Gastrocnemius medialis (tissue), 4 donors: ENCODE measurements at regions of chr7 and their contacts with region 1.

Region 1: DNA sequence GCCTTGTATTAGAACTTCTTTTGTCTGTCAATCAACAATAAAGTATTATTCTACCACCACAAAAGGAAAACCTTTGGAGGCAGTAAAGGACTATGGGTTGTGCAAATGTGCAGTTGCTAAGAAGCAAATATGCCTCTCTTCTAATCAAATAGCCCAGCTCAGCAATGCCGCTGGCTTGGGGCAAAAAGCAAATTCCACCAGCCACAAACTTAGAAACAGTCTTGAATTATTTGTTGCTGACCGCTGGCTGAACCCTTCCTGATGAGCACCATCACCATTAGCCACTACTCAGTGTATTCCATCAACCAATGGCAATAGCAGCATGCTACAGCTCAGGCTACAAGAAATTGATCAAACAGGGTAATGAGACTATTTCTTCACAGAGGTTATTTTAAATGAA is 51.0 kb downstream of the SKAP2 start:
- DNase-seq: no peak
- ATAC-seq: no peak
- H3K4me3 ChIP-seq: no peak overlapping the region
- H3K27ac ChIP-seq: no peak overlapping the region
- H3K4me1 ChIP-seq: no peaks in the 10 kb centered on the region
- H3K27me3 ChIP-seq: no peaks in the 10 kb centered on the region
- CTCF ChIP-seq: no peak
- POLR2A ChIP-seq: no peak

Region 2: DNA sequence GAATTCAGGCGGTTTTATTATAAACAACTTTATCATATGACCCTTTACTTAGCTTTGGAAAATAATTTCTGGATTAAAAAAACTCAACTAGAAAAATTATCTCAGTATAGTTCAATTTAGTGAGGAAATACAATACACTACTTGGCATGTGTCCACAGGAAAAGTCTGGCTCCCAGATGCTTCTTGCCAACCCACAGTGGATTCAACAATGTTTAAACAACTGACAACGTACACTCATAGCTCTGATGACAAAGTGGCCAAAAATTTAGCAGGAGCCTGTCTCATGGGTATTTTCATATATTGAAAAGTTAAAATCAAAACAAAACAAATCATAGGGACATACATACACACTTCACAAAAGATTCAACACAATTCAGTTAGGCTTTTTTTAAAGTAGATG is 107.9 kb before region 1 on chr7:
- in situ Hi-C with region 1: loop called in 1 of 4 experiments (anchors 25 kb)
- intact Hi-C with region 1: no loop called
- DNase-seq: no peak
- ATAC-seq: no peak
- H3K4me3 ChIP-seq: no peak overlapping the region
- H3K27ac ChIP-seq: no peak overlapping the region
- H3K4me1 ChIP-seq: peaks cover 0 to 9% of the 10 kb centered on the region in 2 donors
- H3K27me3 ChIP-seq: no peaks in the 10 kb centered on the region
- CTCF ChIP-seq: no peak
- POLR2A ChIP-seq: no peak